CD14-positive monocyte (primary cell): ENCODE measurements at regions of chr15 and their contacts with region 1.

Region 1: DNA sequence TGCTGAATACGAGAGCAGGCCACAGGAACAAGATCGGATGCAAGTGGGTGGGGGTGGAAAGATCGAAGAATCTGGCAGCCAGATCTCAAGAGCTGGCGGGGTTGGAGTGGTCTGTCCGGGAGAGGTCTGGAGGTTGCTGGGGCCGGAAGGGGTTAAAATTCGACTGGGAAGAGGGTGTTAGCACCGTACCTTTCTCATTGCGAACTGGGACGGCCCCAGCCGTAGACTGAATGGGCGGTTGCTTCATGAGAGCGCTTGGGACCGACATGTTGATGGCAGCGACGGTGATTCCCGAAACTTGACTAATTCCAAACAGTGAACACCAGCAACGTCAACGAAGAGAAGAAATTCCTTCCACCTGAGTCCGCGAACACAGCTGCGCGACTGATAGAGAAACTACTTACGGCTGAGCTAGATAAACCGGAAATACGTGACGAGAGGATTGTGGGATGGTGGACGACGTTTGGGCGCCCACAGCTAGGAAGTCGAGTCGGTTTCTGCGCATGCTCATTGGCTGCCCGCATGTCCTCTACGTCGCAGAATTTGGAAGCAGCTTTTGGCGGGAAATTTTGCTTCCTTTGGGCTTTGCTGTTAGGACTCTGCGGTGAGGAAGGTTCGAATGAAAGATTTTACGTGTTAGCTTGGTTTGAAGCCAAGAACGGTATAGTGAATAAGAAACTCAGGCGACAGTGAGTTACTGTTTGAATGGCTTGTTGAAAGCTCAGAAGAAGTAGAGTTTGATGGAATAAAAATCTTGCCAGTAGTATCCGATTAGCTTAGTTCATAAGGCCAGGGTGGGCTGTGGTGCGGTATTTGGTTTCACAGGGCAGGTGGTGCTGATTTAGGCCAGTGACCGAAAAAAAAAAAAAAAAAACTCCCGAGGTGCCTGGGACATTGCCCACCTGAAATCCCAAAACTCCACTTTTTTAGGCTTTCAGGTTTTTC is at the start of gene MFAP1:
- DNase-seq: peak; percentile 94 to 97 (median 97)
- H3K4me3 ChIP-seq: peak within 1 kb of the TSS; percentile 79 to 95 (median 91)
- H3K4me3 Mint-ChIP-seq: peak within 1 kb of the TSS; percentile 98 to 99
- H3K27ac ChIP-seq: peak within 1 kb of the TSS; percentile 86 to 96
- H3K27ac Mint-ChIP-seq: peak within 1 kb of the TSS; percentile 98 to 100 (median 99)
- H3K4me1 ChIP-seq: peaks cover 20 to 38% of the 10 kb centered on the region in 2 donors
- H3K4me1 Mint-ChIP-seq: peaks cover 35% of the 10 kb centered on the region
- H3K27me3 ChIP-seq: no peaks in the 10 kb centered on the region
- H3K27me3 Mint-ChIP-seq: peaks cover 0 to 4% (median 0%) of the 10 kb centered on the region in 3 donors
- CTCF ChIP-seq: no peak
- polyA plus RNA-seq, gene MFAP1: 2.6 to 3.7 (median 3.7) TPM

Region 2: DNA sequence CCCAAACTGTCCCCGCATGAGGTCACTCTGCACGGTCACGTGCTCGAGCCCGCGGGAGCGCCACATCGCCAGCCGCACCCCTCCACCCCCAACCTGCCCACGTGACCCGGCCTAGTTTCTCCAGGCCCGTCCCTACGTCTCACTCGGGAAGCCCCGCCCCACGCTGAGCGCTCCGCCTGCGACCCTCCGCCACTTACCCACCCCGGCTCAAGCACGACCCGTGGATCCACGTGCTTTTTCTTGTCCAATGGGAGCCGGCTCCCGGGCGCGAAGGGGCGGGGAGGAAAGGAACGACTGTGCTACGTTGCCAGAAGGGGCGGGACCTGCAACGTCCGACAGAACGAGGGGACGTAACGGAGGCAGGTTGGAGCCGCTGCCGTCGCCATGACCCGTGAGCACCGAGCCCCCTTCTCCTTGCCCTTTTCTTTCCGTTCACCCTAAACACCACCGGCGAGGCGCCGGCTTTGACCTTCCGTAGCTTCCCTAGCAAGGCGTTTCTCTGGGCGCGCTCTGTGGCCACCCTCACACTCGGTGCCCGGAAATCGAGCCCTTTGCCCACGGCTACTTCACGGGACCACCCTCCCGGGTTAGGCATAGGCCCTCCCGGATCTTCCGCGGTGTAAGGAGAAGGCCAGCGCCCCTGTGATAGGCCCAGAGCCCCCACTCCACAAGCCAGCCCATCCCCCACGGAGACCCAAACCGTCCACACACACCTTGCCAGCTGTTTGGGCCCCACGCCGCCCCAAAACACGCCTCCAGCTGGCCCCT is 32.4 kb before region 1 on chr15 and contains the start of gene SERF2:
- intact Hi-C with region 1: loop called (anchors 5 kb)
- DNase-seq: peak; percentile 98 to 100 (median 100)
- H3K4me3 ChIP-seq: peak within 1 kb of the TSS; percentile 83 to 100 (median 100)
- H3K4me3 Mint-ChIP-seq: peak within 1 kb of the TSS; percentile 95
- H3K27ac ChIP-seq: peak within 1 kb of the TSS; percentile 98 to 100
- H3K27ac Mint-ChIP-seq: peak within 1 kb of the TSS; percentile 98 to 100 (median 99)
- H3K4me1 ChIP-seq: peaks cover 21 to 27% of the 10 kb centered on the region in 2 donors
- H3K4me1 Mint-ChIP-seq: peaks cover 35% of the 10 kb centered on the region
- H3K27me3 ChIP-seq: no peaks in the 10 kb centered on the region
- H3K27me3 Mint-ChIP-seq: peaks cover 0 to 1% (median 0%) of the 10 kb centered on the region in 3 donors
- CTCF ChIP-seq: no peak
- polyA plus RNA-seq, gene SERF2: 1,511 to 3,135 (median 2,483) TPM